ENCODE measurements at regions of chr9 and their contacts with region 1.

Region 1: GRCh38 chr9:112379177-112380101 is 469 bp upstream of the HSDL2 start:
- DNase-seq: peak; percentile 97 to 99 (median 98)
- H3K4me3 ChIP-seq: peak overlapping the region; percentile 68 to 99 (median 91)
- H3K27ac ChIP-seq: peak overlapping the region; percentile 79 to 99 (median 96)
- H3K27me3 ChIP-seq: no peaks in the 10 kb centered on the region
- CTCF ChIP-seq: peak in 49 of 56 donors; percentile 8 to 67 (median 33)

Region 2: DNA sequence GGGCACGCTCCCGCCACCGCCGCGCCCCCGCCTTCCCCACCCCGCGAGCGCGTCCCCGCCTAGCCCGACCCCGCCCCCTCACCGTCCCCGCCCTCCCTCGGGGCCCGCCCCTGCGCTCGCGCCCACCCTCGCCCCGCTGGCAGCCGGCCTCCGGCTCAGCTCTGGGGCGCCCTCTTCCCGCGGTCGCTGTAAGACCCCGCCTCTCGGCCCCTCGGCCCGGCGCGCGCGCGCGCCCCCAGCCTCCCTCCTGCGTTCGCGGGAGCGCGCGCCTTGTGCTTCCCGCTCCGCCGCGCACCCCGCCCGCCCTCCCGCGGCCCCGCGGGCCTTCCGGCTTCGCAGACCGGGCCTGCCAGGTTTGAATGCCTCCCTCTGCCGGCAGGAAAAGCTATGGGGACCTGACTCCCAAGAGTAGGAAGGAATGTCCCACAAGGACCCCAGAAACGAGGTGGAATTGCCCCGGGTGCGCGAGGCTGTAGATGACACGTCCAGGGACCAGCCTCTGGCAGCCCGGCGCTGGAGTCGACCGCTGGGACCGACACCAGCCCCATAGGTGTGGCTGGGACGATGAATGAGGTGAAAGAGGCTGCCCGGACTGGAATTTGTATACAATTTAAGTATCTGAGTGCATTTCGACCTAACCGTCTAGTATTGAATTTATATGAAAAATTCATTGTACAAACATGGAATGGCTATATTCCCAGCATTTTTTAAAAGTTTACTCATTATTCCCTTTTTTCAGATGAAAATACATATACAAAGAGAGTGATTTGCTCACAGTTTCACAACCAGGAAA is 45.6 kb before region 1 on chr9:
- intact Hi-C with region 1: loop called in 1 of 2 experiments (anchors 5 kb)
- DNase-seq: peak; percentile 74 to 93 (median 88)
- H3K4me3 ChIP-seq: peak overlapping the region; percentile 61 to 99 (median 90)
- H3K27ac ChIP-seq: peak overlapping the region; percentile 82 to 99 (median 95)
- H3K27me3 ChIP-seq: no peaks in the 10 kb centered on the region
- CTCF ChIP-seq: peak in 54 of 56 donors; percentile 31 to 78 (median 54)

Region 3: GRCh38 chr9:112711050-112711689 is 331.7 kb after region 1 on chr9:
- intact Hi-C with region 1: loop called (anchors 5 kb)
- DNase-seq: peak in 2 of 10 donors; percentile 9 to 46
- H3K4me3 ChIP-seq: peak overlapping the region in 28 of 59 donors; percentile 2 to 51 (median 24)
- H3K27ac ChIP-seq: peak overlapping the region in 51 of 59 donors; percentile 17 to 85 (median 65)
- H3K27me3 ChIP-seq: no peaks in the 10 kb centered on the region
- CTCF ChIP-seq: peak; percentile 30 to 89 (median 72)

Region 4: DNA sequence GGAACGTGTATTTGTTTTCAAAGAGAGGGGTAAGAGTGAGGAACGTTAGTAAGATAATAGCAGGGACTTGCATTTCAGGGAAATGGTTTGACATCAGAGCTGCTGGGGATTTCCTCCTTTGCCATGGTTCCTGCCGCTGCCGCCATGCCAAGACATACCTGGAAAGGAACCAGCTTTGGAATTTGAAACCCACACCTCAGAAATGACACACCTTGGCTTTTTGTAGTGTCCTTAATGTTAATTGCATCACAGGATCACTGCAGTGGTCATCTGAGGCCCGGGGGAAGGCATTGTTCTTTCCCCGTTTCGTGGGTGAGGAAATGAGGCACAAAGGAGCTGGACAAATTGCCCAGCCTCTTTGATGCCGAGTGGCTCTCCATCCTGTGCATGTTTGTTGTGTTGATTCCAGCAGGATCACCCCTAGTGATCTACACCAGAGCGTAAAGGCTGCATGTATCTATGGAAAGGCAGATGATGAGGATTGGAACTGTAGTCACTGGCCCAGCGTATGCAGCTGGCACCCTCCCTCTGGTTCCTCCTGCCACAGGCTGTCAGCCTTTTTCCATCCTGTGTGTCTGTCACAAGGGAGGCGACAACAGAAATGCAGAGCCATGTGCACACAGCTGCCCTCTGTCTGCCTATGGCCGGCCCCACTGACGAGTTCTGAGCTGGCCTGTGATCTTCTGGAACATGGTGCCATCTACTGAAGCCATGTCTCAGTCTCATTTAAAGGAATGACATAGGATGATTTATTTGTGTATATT is 473.5 kb after region 1 on chr9:
- intact Hi-C with region 1: loop called in 1 of 2 experiments (anchors 5 kb)
- DNase-seq: peak in 9 of 10 donors; percentile 51 to 89 (median 77)
- H3K4me3 ChIP-seq: peak overlapping the region in 1 of 59 donors; percentile 8
- H3K27ac ChIP-seq: peak overlapping the region in 57 of 59 donors; percentile 1 to 92 (median 76)
- H3K27me3 ChIP-seq: no peaks in the 10 kb centered on the region
- CTCF ChIP-seq: peak in 51 of 56 donors; percentile 17 to 80 (median 47)

Measured in dorsolateral prefrontal cortex (tissue), 120 donors.